HepG2 (cell line): ENCODE measurements at regions of chr3 and their contacts with region 1.

Region 1: GRCh38 chr3:49093853-49094767 is at the start of gene QRICH1:
- DNase-seq: peak; percentile 96
- ATAC-seq: peak; percentile 89
- H3K4me3 ChIP-seq: peak within 1 kb of the TSS; percentile 96 to 100 (median 99)
- H3K27ac ChIP-seq: peak within 1 kb of the TSS; percentile 98
- H3K4me1 ChIP-seq: peaks cover 29% of the 10 kb centered on the region
- H3K27me3 ChIP-seq: no peaks in the 10 kb centered on the region; a peak in 1 of 5 replicates
- CTCF ChIP-seq: peak; percentile 73
- EP300 ChIP-seq: no peak; a peak in 1 of 4 replicates
- POLR2A ChIP-seq: peak; percentile 67 to 86; a peak in 3 of 4 replicates
- RAD21 ChIP-seq: no peak; the same call in none of the 2 replicates
- total RNA-seq, gene QRICH1: 35.5 and 52.6 TPM in 2 replicates

Region 2: DNA sequence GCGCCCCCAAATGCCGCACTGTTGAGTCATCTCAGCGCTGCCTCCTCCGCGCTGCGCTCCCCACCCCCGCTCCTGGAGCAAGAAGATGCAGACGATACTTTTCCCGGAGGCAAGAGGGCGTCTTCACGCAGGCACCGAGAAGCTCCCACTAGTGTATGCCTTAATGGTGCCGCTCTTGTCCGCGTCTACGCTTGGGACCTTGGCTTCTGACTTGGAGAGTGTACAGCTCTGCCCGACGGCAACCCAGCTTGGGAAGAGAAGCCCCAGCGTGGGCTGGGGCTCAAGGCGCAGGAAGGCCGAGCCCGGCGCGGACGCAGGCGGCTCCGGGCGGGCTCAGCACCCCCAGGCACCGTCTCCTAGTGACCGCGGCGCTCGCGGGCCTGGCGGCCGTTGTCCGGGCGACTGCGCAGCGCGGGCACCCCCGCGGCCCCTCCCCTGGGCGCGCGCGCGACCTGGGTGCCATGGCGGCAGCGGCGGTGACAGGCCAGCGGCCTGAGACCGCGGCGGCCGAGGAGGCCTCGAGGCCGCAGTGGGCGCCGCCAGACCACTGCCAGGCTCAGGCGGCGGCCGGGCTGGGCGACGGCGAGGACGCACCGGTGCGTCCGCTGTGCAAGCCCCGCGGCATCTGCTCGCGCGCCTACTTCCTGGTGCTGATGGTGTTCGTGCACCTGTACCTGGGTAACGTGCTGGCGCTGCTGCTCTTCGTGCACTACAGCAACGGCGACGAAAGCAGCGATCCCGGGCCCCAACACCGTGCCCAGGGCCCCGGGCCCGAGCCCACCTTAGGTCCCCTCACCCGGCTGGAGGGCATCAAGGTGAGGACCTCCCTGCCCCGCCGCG is 104.1 kb before region 1 on chr3 and contains the start of gene P4HTM:
- CTCF ChIA-PET with region 1: no interaction called
- POLR2A ChIA-PET with region 1: interaction called, 20 read pairs
- in situ Hi-C with region 1: no loop called
- intact Hi-C with region 1: no loop called
- DNase-seq: no peak
- ATAC-seq: no peak
- H3K4me3 ChIP-seq: no peak within 1 kb of the TSS
- H3K27ac ChIP-seq: no peak within 1 kb of the TSS
- H3K4me1 ChIP-seq: no peaks in the 10 kb centered on the region
- H3K27me3 ChIP-seq: no peaks in the 10 kb centered on the region
- CTCF ChIP-seq: no peak
- EP300 ChIP-seq: no peak
- POLR2A ChIP-seq: no peak
- RAD21 ChIP-seq: no peak
- total RNA-seq, gene P4HTM: not detected in 2 replicates

Region 3: GRCh38 chr3:49021813-49022687 is 72.1 kb before region 1 on chr3 and contains the start of gene NDUFAF3:
- CTCF ChIA-PET with region 1: no interaction called
- POLR2A ChIA-PET with region 1: interaction called, 89 read pairs
- in situ Hi-C with region 1: no loop called
- intact Hi-C with region 1: loop called (anchors 5 kb)
- DNase-seq: peak; percentile 85
- ATAC-seq: peak; percentile 72
- H3K4me3 ChIP-seq: peak within 1 kb of the TSS; percentile 80 to 96 (median 89)
- H3K27ac ChIP-seq: peak within 1 kb of the TSS; percentile 99
- H3K4me1 ChIP-seq: peaks cover 50% of the 10 kb centered on the region
- H3K27me3 ChIP-seq: no peaks in the 10 kb centered on the region; a peak in 1 of 5 replicates
- CTCF ChIP-seq: peak; percentile 97
- EP300 ChIP-seq: peak in 1 of 2 experiments; percentile 8; a peak in 1 of 4 replicates
- POLR2A ChIP-seq: peak in 1 of 2 experiments; percentile 95; a peak in 2 of 4 replicates
- RAD21 ChIP-seq: peak; percentile 57
- total RNA-seq, gene NDUFAF3: 50.0 and 51.9 TPM in 2 replicates

Region 4: DNA sequence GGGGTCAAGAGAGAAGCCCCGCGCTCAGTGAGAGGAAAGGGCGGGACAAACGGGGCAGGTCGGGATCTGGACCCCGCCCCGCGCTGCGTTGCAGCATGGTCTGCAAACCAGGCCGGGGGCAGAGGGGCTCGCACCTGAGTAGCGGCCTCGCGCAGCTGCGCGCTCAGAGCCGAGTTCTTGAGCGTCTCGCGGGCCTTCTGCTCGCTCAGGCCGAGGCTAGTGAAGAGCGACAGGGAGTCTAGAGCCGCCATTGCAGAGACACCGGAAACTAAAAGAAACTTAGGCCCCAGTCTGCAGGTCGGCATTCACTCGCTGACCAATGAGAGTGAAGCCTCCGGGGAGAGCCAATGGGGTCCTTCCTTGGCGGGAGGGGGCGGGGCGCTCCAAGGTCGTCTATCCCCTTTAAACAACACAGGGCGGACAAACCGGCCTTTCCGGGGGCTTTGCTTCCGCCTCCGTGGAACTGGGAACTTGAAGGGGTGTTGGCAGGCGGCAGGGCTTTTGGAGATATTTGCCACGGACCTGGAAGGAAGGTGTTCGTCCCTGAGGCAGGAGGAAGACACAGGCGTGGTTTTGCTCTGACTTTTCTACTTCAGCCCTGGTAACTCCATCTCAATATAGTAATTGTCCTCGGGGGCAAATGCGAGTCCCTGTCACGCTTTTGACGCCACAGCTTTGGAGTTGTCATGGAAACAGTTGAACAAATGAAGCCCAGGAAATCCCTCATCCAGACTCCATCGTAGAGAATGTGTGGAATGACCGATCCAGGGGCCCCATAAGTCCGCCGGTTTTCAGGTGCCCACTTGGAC is 10.6 kb after region 1 on chr3 and contains the start of gene QARS1:
- CTCF ChIA-PET with region 1: no interaction called
- POLR2A ChIA-PET with region 1: interaction called, 91 read pairs
- in situ Hi-C with region 1: no loop called
- intact Hi-C with region 1: no loop called
- DNase-seq: peak; percentile 94
- ATAC-seq: peak; percentile 93
- H3K4me3 ChIP-seq: peak within 1 kb of the TSS; percentile 89 to 94 (median 93)
- H3K27ac ChIP-seq: peak within 1 kb of the TSS; percentile 93
- H3K4me1 ChIP-seq: peaks cover 24% of the 10 kb centered on the region
- H3K27me3 ChIP-seq: no peaks in the 10 kb centered on the region
- CTCF ChIP-seq: no peak
- EP300 ChIP-seq: no peak; a peak in 1 of 4 replicates
- POLR2A ChIP-seq: peak; percentile 80 to 84
- RAD21 ChIP-seq: no peak; the same call in 1 of the 2 replicates
- total RNA-seq, gene QARS1: 307 and 408 TPM in 2 replicates

Region 5: DNA sequence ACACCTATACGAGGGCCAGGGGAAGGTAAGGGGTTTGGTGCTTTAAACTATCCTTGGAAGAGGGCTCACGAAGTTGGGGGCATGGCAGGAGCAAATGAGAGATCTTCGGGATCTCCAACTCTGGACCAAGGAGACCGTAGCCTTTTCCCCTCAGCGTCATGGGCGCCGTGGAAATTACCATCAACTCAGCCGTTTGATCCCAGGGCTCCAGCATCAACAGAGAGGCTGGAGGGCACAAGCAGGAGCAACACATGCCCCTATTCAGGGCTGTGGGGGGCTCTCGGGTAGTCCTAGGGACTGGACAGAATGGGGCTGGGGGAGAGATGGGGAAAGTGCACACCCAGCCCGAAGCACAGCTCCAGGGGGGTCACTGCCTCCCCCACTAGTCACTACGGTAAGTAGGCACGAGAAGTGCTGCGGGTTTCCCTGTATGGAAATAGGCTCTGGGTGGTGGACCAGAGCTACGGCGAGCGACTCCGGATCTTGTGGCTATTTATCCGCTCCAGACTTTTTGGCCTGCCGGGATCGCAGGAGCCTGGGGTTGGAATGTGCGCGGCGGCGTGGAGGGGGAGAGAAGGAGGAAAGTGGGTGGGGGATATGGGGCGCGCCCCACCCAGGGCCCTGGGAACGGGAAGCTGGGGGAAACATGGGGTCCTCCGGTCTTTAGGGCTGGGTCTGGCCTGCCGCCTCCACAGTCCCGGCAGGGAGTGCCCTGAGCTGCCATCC is 39.3 kb after region 1 on chr3:
- CTCF ChIA-PET with region 1: no interaction called
- POLR2A ChIA-PET with region 1: interaction called, 70 read pairs
- in situ Hi-C with region 1: no loop called
- intact Hi-C with region 1: loop called (anchors 5 kb)
- DNase-seq: peak; percentile 80
- ATAC-seq: peak; percentile 60
- H3K4me3 ChIP-seq: peak overlapping the region; percentile 72 to 78 (median 77)
- H3K27ac ChIP-seq: peak overlapping the region; percentile 80
- H3K4me1 ChIP-seq: peaks cover 39% of the 10 kb centered on the region
- H3K27me3 ChIP-seq: no peaks in the 10 kb centered on the region
- CTCF ChIP-seq: peak; percentile 35
- EP300 ChIP-seq: no peak
- POLR2A ChIP-seq: peak in 1 of 2 experiments; percentile 31; a peak in 1 of 4 replicates
- RAD21 ChIP-seq: 0 out of 2 replicates have a peak, but pooled peaks have one; percentile 18

Region 6: DNA sequence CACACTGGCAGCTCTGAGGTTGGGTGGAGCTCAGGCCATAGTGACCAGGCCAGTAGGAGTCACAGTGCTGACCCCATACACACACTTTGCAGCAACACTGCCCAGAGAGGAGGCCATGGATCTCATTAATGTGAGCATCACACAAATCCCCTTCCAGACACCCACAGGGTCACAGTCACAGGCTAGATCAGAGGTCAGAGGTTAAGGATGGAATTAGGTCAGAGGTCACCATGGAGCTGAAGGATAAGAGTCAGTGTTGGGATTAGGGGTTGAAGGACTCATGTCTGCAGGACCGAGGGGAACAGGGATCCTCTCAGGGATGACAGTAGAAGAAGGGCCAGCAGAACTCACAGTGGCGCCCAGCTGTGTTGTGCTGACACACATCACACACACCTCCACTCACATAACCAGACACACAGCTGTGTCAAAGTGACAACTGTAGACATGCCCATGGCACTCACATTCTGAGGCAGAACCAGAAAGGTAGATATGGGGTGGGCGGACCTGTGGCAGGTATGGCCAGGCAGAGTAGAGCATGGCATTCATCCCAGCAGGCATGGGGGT is 59.3 kb after region 1 on chr3:
- CTCF ChIA-PET with region 1: no interaction called
- POLR2A ChIA-PET with region 1: no interaction called
- in situ Hi-C with region 1: no loop called
- intact Hi-C with region 1: no loop called
- DNase-seq: no peak
- ATAC-seq: peak; percentile 14; the same call in 1 of the 3 replicates
- H3K4me3 ChIP-seq: no peak overlapping the region
- H3K27ac ChIP-seq: no peak overlapping the region
- H3K4me1 ChIP-seq: peaks cover 10% of the 10 kb centered on the region
- H3K27me3 ChIP-seq: no peaks in the 10 kb centered on the region
- CTCF ChIP-seq: no peak
- EP300 ChIP-seq: no peak
- POLR2A ChIP-seq: no peak
- RAD21 ChIP-seq: no peak

Region 7: DNA sequence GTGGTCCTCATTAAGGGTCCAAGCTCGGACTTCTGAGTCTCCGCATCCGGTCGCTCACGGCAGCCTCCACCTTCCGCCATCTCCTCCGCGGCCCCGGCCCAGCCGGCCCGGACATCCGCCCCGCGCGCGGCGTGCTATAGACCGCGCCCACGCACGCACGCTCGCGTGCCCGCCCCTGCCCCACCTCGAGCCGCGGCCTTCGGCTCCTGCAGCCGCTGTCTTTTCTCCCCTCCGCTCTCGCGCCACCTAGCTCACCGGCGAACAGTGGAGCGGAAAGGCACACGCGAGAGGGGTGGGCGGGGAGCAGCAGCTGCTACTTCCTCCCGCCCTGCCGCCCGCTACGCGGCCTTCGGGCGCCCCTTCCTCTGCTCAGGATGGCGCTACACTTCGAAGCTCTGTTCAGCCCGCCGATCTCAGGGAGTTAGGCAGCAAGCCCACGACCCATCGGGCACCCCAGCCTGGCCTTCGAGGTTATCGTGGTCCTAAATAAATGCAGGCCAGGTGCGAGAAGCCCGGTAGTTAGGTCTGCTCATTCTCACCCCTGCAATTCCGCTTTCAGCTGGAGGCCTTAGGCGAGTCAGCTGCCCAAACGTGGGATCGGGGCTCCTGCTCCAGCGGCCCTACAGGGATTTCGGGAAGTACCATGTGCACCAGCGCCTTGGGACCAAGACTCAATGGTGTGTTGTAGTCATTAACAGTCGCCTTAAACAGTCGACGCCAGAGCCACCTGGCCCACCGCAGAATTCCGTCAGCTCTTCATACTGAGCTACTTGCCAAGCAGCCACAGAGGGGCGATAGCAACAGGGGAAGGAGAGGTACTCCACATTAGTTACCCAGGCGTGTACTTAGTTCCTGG is 246.1 kb after region 1 on chr3 and contains the start of gene USP4:
- CTCF ChIA-PET with region 1: no interaction called
- POLR2A ChIA-PET with region 1: interaction called, 14 read pairs
- in situ Hi-C with region 1: no loop called
- intact Hi-C with region 1: no loop called
- DNase-seq: peak; percentile 89
- ATAC-seq: peak; percentile 92
- H3K4me3 ChIP-seq: peak within 1 kb of the TSS; percentile 76 to 90 (median 82)
- H3K27ac ChIP-seq: peak within 1 kb of the TSS; percentile 93
- H3K4me1 ChIP-seq: peaks cover 44% of the 10 kb centered on the region
- H3K27me3 ChIP-seq: no peaks in the 10 kb centered on the region
- CTCF ChIP-seq: peak; percentile 84
- EP300 ChIP-seq: peak in 1 of 2 experiments; percentile 16; a peak in 1 of 4 replicates
- POLR2A ChIP-seq: peak; percentile 63 to 78
- RAD21 ChIP-seq: peak; percentile 79
- total RNA-seq, gene USP4: 9.2 and 12.1 TPM in 2 replicates

Region 8: GRCh38 chr3:49411968-49412631 is 318.0 kb after region 1 on chr3 and contains the starts of genes RHOA and TCTA:
- CTCF ChIA-PET with region 1: no interaction called
- POLR2A ChIA-PET with region 1: interaction called, 9 read pairs
- in situ Hi-C with region 1: no loop called
- intact Hi-C with region 1: loop called (anchors 5 kb)
- DNase-seq: peak; percentile 99
- ATAC-seq: peak; percentile 90
- H3K4me3 ChIP-seq: peak within 1 kb of the TSS; percentile 81 to 93 (median 90)
- H3K27ac ChIP-seq: peak within 1 kb of the TSS; percentile 91
- H3K4me1 ChIP-seq: peaks cover 47% of the 10 kb centered on the region
- H3K27me3 ChIP-seq: no peaks in the 10 kb centered on the region; a peak in 1 of 5 replicates
- CTCF ChIP-seq: peak; percentile 32; the same call in 1 of the 2 replicates
- EP300 ChIP-seq: no peak; a peak in 1 of 4 replicates
- POLR2A ChIP-seq: peak; percentile 96 to 99
- RAD21 ChIP-seq: peak; percentile 30; the same call in 1 of the 2 replicates
- total RNA-seq, gene RHOA: 177 and 258 TPM in 2 replicates
- total RNA-seq, gene TCTA: 6.7 and 8.3 TPM in 2 replicates